B cell (primary cell): ENCODE measurements at regions of chr7 and their contacts with region 1.

Region 1: DNA sequence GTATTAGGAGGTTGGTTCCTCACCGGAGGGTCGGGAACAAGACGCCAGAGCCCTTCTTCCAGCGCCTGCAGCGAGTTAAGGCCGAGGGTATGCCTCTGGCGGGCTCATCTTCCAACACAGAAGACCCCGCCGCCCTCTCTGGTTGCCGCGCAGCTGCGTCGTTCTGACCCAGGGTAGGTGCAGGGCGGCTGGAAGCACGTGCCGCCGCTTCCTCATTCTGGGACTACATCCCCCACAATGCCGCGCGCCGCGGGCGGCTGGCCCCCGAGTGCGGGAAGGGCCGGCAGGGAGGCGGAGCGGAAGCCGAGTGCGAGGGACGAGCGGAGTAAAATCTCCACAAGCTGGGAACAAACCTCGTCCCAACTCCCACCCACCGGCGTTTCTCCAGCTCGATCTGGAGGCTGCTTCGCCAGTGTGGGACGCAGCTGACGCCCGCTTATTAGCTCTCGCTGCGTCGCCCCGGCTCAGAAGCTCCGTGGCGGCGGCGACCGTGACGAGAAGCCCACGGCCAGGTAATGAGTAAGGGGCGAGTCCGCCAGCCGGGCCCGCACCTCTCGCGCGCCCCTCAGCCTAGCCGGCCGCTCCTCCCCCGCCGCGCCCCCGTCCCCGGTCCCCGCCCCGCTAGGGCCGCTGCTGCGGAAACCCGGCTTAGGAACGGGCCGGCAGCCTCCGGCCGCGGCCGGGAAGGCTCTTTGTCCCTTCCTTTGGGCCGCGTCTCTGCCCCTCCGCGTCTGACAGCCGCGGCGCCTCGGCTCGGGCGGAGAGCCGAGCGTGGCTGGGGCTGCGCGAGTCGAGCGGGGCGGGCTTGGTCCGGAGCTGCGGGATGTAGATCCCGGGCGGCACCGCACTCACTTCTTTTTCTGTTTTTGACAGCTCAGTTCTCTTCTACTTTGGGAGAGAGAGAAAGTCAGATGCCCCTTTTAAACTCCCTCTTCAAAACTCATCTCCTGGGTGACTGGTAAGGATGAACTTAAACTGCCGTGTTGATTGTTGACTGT is at the start of gene CCDC126:
- DNase-seq: peak; percentile 89
- ATAC-seq: peak; percentile 92
- H3K4me3 ChIP-seq: peak within 1 kb of the TSS; percentile 79 to 93 (median 88)
- H3K4me3 Mint-ChIP-seq: peak within 1 kb of the TSS; percentile 91
- H3K27ac ChIP-seq: peak within 1 kb of the TSS; percentile 70 to 80
- H3K27ac Mint-ChIP-seq: peak within 1 kb of the TSS; percentile 80
- H3K4me1 ChIP-seq: peaks cover 15 to 58% of the 10 kb centered on the region in 2 donors
- H3K4me1 Mint-ChIP-seq: peaks cover 41% of the 10 kb centered on the region
- H3K27me3 ChIP-seq: no peaks in the 10 kb centered on the region
- H3K27me3 Mint-ChIP-seq: no peaks in the 10 kb centered on the region
- CTCF ChIP-seq: no peak
- total RNA-seq, gene CCDC126: 15.0 and 18.0 TPM in 2 replicates

Region 2: DNA sequence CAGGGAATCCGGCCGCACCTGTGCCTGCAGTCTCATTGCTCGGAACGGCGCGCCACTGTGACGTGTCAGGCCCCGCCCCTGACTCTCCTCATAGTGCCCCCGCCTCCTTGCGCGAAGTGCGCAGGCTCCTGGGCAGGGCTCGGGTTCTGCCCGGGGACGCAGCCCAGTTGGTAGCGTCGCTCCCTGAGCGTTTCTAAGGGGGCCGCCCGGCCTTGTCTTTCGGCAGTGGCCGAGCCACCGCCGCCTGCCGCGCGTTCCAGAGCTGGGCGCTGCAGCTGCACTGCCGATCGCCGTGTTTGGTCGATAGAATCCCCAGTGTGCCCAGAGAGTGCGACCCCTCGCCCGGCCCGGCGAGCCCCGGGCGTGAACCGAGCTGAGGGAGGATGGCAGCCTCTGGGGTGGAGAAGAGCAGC is 491.7 kb before region 1 on chr7 and contains the start of gene KLHL7:
- CTCF ChIA-PET with region 1: no interaction called
- POLR2A ChIA-PET with region 1: no interaction called
- intact Hi-C with region 1: loop called (anchors 1 kb)
- DNase-seq: peak; percentile 96
- ATAC-seq: peak; percentile 96
- H3K4me3 ChIP-seq: peak within 1 kb of the TSS; percentile 86 to 99 (median 94)
- H3K4me3 Mint-ChIP-seq: peak within 1 kb of the TSS; percentile 99
- H3K27ac ChIP-seq: peak within 1 kb of the TSS; percentile 88 to 95
- H3K27ac Mint-ChIP-seq: peak within 1 kb of the TSS; percentile 97
- H3K4me1 ChIP-seq: peaks cover 15 to 16% of the 10 kb centered on the region in 2 donors
- H3K4me1 Mint-ChIP-seq: peaks cover 32% of the 10 kb centered on the region
- H3K27me3 ChIP-seq: no peaks in the 10 kb centered on the region
- H3K27me3 Mint-ChIP-seq: no peaks in the 10 kb centered on the region
- CTCF ChIP-seq: no peak
- total RNA-seq, gene KLHL7: 22.8 and 29.5 TPM in 2 replicates

Region 3: DNA sequence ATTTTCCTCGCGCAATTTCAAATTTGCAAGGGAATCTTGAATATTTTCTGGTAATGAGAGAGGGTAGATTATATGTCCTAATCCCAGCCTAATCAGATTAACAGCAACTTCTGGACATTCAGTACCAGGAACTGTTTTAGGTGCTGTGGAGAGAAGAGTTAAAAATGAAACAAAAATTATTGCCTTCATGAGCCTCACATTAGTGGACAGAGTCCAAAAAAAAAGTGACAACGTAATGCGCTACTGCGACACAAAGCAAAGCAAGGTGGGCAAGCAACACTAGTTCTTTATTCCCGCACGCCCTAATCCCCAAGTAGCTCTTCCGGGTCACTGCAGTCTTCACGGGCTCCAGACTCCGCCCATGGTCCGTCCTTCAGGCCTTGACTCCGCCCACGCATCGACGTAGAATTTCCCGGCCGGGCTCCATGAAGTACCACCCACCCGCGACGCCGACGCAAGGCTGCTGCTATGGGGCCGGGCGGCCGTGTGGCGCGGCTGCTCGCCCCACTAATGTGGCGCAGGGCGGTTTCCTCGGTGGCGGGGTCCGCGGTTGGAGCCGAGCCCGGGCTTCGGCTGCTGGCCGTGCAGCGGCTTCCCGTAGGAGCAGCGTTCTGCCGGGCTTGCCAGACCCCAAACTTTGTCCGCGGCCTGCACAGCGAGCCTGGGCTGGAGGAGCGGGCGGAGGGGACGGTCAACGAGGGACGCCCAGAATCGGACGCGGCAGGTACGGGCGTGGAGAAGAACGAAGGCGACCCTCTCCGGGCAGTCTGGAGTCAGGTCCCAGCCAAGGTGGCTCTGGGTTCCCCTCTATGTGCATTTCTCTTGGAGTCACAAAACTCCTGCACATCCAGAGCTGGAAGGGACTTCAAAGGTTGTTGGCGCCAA is 298.3 kb before region 1 on chr7 and contains the start of gene MALSU1:
- CTCF ChIA-PET with region 1: no interaction called
- POLR2A ChIA-PET with region 1: no interaction called
- intact Hi-C with region 1: loop called (anchors 1 kb)
- DNase-seq: peak; percentile 98
- ATAC-seq: peak; percentile 100
- H3K4me3 ChIP-seq: peak within 1 kb of the TSS; percentile 70 to 95 (median 86)
- H3K4me3 Mint-ChIP-seq: peak within 1 kb of the TSS; percentile 87
- H3K27ac ChIP-seq: peak within 1 kb of the TSS; percentile 73 to 86
- H3K27ac Mint-ChIP-seq: peak within 1 kb of the TSS; percentile 94
- H3K4me1 ChIP-seq: peaks cover 16 to 23% of the 10 kb centered on the region in 2 donors
- H3K4me1 Mint-ChIP-seq: peaks cover 39% of the 10 kb centered on the region
- H3K27me3 ChIP-seq: peaks cover 0 to 6% (median 0%) of the 10 kb centered on the region in 4 experiments
- H3K27me3 Mint-ChIP-seq: no peaks in the 10 kb centered on the region
- CTCF ChIP-seq: no peak
- total RNA-seq, gene MALSU1: 38.0 and 40.8 TPM in 2 replicates

Region 4: DNA sequence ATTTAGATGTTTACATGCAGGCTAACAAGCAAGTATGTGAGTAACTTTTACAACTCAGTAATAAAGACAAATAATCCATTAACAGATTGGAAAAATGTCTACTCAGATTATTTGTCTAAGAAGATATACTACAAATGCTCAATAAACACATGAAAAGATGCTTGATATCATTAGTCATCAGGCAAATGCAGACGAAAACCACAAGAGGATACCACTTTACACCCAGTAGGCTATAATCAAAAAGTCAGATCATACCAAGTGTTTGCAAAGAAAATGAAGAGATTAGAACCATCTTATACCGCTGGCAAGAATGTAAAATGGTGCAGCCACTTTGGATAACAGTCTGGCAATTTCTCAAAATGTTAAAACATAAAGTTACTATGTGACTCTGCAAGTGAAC is 214.2 kb before region 1 on chr7:
- CTCF ChIA-PET with region 1: no interaction called
- POLR2A ChIA-PET with region 1: no interaction called
- intact Hi-C with region 1: no loop called
- DNase-seq: no peak
- ATAC-seq: no peak
- H3K4me3 ChIP-seq: no peak overlapping the region
- H3K4me3 Mint-ChIP-seq: no peak overlapping the region
- H3K27ac ChIP-seq: no peak overlapping the region
- H3K27ac Mint-ChIP-seq: no peak overlapping the region
- H3K4me1 ChIP-seq: peaks cover 0 to 4% of the 10 kb centered on the region in 2 donors
- H3K4me1 Mint-ChIP-seq: peaks cover 9% of the 10 kb centered on the region
- H3K27me3 ChIP-seq: no peaks in the 10 kb centered on the region
- H3K27me3 Mint-ChIP-seq: no peaks in the 10 kb centered on the region
- CTCF ChIP-seq: no peak

Region 5: GRCh38 chr7:23546897-23547572 is 50.4 kb before region 1 on chr7:
- CTCF ChIA-PET with region 1: interaction called, 20 read pairs
- POLR2A ChIA-PET with region 1: interaction called, 8 read pairs
- intact Hi-C with region 1: no loop called
- DNase-seq: peak; percentile 90
- ATAC-seq: peak; percentile 91
- H3K4me3 ChIP-seq: peak overlapping the region in 1 of 5 experiments; percentile 18
- H3K4me3 Mint-ChIP-seq: no peak overlapping the region
- H3K27ac ChIP-seq: no peak overlapping the region
- H3K27ac Mint-ChIP-seq: no peak overlapping the region
- H3K4me1 ChIP-seq: peaks cover 8 to 13% of the 10 kb centered on the region in 2 donors
- H3K4me1 Mint-ChIP-seq: peaks cover 15% of the 10 kb centered on the region
- H3K27me3 ChIP-seq: no peaks in the 10 kb centered on the region
- H3K27me3 Mint-ChIP-seq: no peaks in the 10 kb centered on the region
- CTCF ChIP-seq: peak; percentile 98

Region 6: DNA sequence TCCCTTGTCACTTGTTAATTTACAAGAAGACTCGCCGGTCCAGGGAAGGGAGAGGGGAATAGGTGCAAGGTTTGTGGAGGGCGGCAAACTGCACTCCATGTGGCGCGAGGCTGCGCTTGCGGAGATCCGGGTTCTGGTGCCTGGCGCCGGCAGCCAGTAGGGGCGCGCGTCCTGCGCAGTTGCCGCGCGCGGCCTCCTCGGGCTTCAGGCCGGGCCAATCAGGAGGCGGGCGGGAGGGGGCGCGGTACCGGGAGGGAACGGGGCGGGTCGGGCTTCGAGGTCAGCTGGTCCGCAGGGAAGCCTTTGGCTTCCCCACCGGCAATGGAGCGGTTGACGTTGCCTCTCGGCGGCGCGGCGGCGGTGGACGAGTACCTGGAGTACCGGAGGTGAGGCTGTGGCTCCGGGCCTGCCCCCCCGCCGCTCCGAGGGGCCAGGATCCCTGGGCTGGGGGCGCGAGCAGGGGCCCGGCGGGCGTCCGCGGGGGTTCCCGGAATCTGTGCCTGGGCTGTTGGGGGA is 82.6 kb after region 1 on chr7 and contains the start of gene FAM221A:
- CTCF ChIA-PET with region 1: interaction called, 10 read pairs
- POLR2A ChIA-PET with region 1: interaction called, 5 read pairs
- intact Hi-C with region 1: loop called (anchors 1 kb)
- DNase-seq: peak; percentile 89
- ATAC-seq: peak; percentile 99
- H3K4me3 ChIP-seq: peak within 1 kb of the TSS; percentile 51 to 85 (median 75)
- H3K4me3 Mint-ChIP-seq: peak within 1 kb of the TSS; percentile 90
- H3K27ac ChIP-seq: peak within 1 kb of the TSS in 1 of 2 donors; percentile 57
- H3K27ac Mint-ChIP-seq: peak within 1 kb of the TSS; percentile 81
- H3K4me1 ChIP-seq: peaks cover 0 to 15% of the 10 kb centered on the region in 2 donors
- H3K4me1 Mint-ChIP-seq: peaks cover 9% of the 10 kb centered on the region
- H3K27me3 ChIP-seq: no peaks in the 10 kb centered on the region
- H3K27me3 Mint-ChIP-seq: no peaks in the 10 kb centered on the region
- CTCF ChIP-seq: peak; percentile 80
- total RNA-seq, gene FAM221A: 10.7 and 10.8 TPM in 2 replicates

Region 7: DNA sequence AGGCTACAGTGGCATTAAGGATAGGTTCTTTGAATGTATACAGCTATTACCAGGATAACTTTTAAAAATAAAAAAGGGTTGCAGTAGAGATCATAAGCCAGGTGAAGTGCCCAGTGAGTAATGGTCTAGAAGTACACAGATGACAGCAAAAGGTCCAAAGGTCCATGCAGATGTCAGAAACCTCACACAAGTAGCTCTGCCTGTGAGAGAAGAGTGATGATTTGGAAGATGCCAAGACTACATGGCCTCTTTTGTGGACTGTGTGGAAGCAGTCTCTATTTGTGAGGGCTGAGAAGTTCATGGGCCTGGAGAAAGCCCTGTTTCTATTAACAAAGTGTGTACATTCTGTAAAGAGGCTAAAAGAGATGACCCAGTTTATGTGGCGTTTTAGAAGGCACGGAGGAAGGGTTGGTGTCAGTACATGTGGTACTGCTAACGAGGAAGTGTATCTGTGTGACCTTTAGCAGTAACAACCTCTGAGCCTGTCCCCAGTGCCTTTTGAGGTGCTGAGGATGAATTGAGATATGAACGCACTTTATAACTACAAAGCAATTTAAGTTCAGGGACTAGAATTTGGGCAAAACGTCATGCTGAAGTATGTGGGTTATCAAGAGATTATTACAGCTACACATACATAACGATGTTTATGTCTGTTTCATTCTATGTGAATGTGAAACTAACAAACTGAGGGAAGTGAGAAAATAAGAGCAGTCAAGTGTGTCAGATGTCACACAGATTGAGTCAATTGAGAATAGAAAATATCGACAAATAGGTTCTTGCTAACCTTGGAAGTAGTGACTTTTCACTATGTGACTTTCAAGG is 1520.0 kb after region 1 on chr7:
- CTCF ChIA-PET with region 1: no interaction called
- POLR2A ChIA-PET with region 1: no interaction called
- intact Hi-C with region 1: loop called (anchors 10 kb)
- DNase-seq: peak; percentile 81
- ATAC-seq: peak; percentile 89
- H3K4me3 ChIP-seq: peak overlapping the region; percentile 12 to 54 (median 40)
- H3K4me3 Mint-ChIP-seq: peak overlapping the region; percentile 87
- H3K27ac ChIP-seq: peak overlapping the region; percentile 71 to 82
- H3K27ac Mint-ChIP-seq: peak overlapping the region; percentile 97
- H3K4me1 ChIP-seq: peaks cover 27% of the 10 kb centered on the region in 2 donors
- H3K4me1 Mint-ChIP-seq: peaks cover 41% of the 10 kb centered on the region
- H3K27me3 ChIP-seq: no peaks in the 10 kb centered on the region
- H3K27me3 Mint-ChIP-seq: no peaks in the 10 kb centered on the region
- CTCF ChIP-seq: no peak